ENCODE measurements at regions of chr3 and their contacts with region 1.

Region 1: GRCh38 chr3:50192689-50193141 is 1.3 kb downstream of the GNAT1 start:
- DNase-seq: peak in 8 of 10 donors; percentile 59 to 83 (median 78)
- H3K4me3 ChIP-seq: no peak overlapping the region
- H3K27ac ChIP-seq: no peak overlapping the region
- H3K27me3 ChIP-seq: peaks cover 0 to 23% (median 14%) of the 10 kb centered on the region in 45 donors
- CTCF ChIP-seq: peak; percentile 82 to 95 (median 92)

Region 2: GRCh38 chr3:49723628-49724551 is 468.8 kb before region 1 on chr3 and contains the start of gene GMPPB:
- intact Hi-C with region 1: loop called in 1 of 2 experiments (anchors 10 kb)
- DNase-seq: peak; percentile 93 to 98 (median 97)
- H3K4me3 ChIP-seq: peak within 1 kb of the TSS; percentile 70 to 100 (median 96)
- H3K27ac ChIP-seq: peak within 1 kb of the TSS in 56 of 59 donors; percentile 18 to 93 (median 84)
- H3K27me3 ChIP-seq: no peaks in the 10 kb centered on the region
- CTCF ChIP-seq: peak in 14 of 56 donors; percentile 13 to 40 (median 26)
- total RNA-seq, gene GMPPB: 10.6 to 25.4 (median 17.0) TPM

Region 3: GRCh38 chr3:49984394-49984793 is 208.3 kb before region 1 on chr3:
- intact Hi-C with region 1: no loop called
- DNase-seq: no peak
- H3K4me3 ChIP-seq: no peak overlapping the region
- H3K27ac ChIP-seq: no peak overlapping the region
- H3K27me3 ChIP-seq: no peaks in the 10 kb centered on the region
- CTCF ChIP-seq: no peak

Region 4: DNA sequence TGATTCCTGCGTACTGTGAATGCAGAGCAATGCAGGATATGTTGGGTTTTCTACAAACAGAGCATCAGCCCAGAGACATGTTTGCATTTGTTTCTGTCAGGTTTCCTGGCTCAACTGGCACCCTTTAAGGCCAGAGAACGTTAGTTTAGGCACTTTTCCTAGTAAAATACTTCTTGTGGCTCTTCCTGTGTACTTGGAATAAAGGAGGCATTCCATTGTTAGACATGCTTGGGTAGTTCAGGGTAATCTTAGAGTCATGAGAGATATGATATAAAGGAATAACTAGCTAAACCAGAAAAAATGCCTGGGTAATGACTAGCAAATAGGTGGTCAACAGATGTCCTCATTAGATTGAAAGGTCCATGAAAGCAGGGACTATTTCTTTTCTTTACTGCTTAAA is 164.4 kb before region 1 on chr3:
- intact Hi-C with region 1: no loop called
- DNase-seq: no peak
- H3K4me3 ChIP-seq: no peak overlapping the region
- H3K27ac ChIP-seq: no peak overlapping the region
- H3K27me3 ChIP-seq: no peaks in the 10 kb centered on the region
- CTCF ChIP-seq: no peak

Region 5: GRCh38 chr3:50121416-50122032 is 71.2 kb before region 1 on chr3:
- intact Hi-C with region 1: loop called (anchors 1 to 2 kb)
- DNase-seq: peak; percentile 57 to 83 (median 79)
- H3K4me3 ChIP-seq: no peak overlapping the region
- H3K27ac ChIP-seq: peak overlapping the region in 30 of 59 donors; percentile 3 to 75 (median 50)
- H3K27me3 ChIP-seq: no peaks in the 10 kb centered on the region
- CTCF ChIP-seq: peak; percentile 72 to 95 (median 88)

Region 6: DNA sequence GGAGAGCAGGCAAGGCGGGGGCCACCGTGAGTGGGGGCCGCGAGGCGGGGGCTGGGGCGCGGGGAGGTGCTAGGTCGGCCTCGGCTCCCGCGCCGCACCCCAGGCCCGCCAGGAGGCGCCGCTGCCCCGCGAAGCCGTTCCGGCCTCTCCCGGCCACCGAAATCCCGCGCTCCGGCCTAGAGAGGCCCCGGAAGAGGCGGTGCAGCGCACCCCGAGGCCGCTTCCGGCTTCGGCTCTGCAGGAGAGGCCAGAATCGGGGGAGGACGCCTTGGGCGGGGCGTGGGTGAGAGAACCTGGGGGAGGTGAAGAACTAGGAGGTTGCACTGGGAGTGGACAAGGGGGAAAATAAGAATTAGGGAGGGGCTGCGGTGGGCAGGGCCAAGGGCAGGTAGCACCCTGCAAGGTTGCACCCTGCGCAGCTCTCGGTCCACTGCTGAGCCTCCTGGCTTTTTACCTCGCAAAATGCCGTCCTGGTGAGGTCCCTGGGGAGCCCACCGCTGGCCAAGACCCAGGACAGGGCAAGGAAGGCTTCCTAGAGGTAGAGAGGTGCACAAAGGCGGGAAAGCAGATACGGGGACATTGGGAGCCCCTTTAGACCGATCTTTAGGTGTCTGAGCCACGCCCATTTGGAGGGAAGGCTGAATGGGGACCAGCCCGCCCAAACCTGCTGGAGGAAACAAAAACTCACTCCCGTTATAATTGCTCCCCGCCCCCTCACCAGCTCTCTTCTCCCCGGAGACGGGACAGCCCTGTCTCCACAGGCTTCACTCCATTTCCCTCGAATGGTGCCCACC is 34.9 kb after region 1 on chr3:
- intact Hi-C with region 1: loop called (anchors 1 kb)
- DNase-seq: peak; percentile 78 to 94 (median 89)
- H3K4me3 ChIP-seq: peak overlapping the region; percentile 57 to 95 (median 81)
- H3K27ac ChIP-seq: peak overlapping the region; percentile 48 to 94 (median 87)
- H3K27me3 ChIP-seq: no peaks in the 10 kb centered on the region
- CTCF ChIP-seq: peak; percentile 66 to 99 (median 93)

Region 7: GRCh38 chr3:50272911-50273693 is 80.4 kb after region 1 on chr3:
- intact Hi-C with region 1: loop called (anchors 2 to 5 kb)
- DNase-seq: peak; percentile 81 to 92 (median 89)
- H3K4me3 ChIP-seq: peak overlapping the region; percentile 0 to 69 (median 48)
- H3K27ac ChIP-seq: peak overlapping the region; percentile 65 to 100 (median 100)
- H3K27me3 ChIP-seq: peaks cover 0 to 35% (median 14%) of the 10 kb centered on the region in 45 donors
- CTCF ChIP-seq: peak; percentile 97 to 100 (median 99)

Region 8: GRCh38 chr3:50327943-50328691 is 135.4 kb after region 1 on chr3 and contains the start of gene TUSC2:
- intact Hi-C with region 1: loop called in 1 of 2 experiments (anchors 2 kb)
- DNase-seq: peak; percentile 97 to 99 (median 98)
- H3K4me3 ChIP-seq: peak within 1 kb of the TSS; percentile 75 to 100 (median 97)
- H3K27ac ChIP-seq: peak within 1 kb of the TSS in 56 of 59 donors; percentile 35 to 94 (median 82)
- H3K27me3 ChIP-seq: no peaks in the 10 kb centered on the region
- CTCF ChIP-seq: peak in 29 of 56 donors; percentile 10 to 59 (median 30)
- total RNA-seq, gene TUSC2: 29.2 to 71.0 (median 52.4) TPM

Measured in dorsolateral prefrontal cortex (tissue), 120 donors.